GM18951 (cell line): ENCODE measurements at regions of chr6 and their contacts with region 1.

Region 1: DNA sequence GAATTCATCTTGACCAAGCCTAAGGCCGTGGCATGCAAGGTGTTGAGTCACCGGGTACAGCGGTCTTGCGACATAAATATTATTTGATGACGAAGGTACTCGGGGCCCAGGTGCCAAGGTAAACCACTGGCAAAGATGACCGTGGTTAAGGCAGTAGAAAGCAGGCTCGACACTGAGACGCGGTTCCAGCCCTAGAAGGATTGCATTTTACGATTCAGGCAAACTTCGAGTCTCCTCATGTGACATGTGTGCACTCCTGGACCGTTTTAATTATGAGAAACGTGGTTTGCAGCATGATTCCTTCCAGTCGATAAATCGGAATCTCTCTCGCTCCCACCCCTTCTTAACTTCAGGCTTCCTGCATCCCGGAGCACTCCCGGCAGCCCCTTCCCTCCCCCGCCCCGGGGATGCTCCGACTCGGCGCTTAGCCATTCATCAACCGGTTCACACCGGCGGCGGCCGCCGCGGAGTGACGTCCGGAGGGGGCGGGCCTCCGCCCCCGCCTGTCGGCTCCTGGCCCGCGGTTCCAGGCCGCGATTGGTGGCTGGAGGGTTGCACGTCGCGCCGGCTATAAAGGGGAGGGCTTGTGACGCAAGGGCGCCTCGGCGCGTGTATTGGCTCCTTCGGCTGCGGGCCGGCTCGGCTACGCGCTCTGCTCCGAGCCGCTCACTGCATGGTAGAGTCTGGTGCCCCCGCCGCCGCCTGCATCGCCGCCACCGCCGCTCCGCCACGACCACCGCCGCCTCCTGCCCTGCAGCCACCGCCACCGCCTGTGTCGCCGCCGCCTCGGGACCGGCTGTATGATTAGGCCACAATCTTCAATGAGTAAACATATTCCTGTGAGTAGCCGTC is at the starts of genes LOC128125822 and PTP4A1:
- POLR2A ChIP-seq: peak; percentile 91

Region 2: DNA sequence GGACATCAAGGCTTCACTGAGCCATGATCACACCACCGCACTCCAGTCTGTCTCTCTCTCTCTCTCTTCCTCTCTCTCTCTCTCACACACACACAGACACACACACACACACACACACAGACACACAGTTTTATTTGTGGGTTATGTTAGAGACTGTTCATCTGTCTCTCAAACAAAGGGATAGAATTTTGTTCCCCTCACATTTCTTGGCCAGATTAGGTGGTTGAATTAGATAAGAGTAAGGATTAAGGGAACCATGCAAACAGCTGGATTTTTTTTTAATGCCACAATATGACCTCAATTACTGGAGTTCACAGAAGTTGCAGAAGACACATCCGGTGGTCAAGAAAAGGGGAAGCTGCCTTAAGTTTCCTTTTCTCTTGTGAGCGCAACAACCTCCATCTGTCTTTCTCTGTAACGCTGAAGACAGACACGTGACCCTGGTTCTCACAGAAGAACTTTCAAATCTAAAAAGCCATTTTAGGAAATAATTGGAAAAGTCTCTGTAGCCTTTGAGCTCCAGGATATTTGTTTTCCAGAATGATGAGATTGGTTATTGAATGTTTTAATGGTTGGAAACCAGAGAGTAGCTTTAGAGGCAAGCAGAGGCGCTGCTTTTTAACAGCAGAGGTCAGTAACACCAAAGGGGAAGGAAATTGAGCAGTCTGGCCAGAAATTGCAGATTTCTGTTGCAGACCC is 219.4 kb before region 1 on chr6:
- in situ Hi-C with region 1: loop called (anchors 10 kb)
- POLR2A ChIP-seq: peak; percentile 19